Colonic mucosa (tissue), 4 donors: ENCODE measurements at regions of chr3 and their contacts with region 1.

Region 1: GRCh38 chr3:107271787-107272387 is 105.4 kb upstream of the CCDC54 start:
- DNase-seq: no peak
- H3K4me3 ChIP-seq: no peak overlapping the region
- H3K27ac ChIP-seq: no peak overlapping the region
- H3K4me1 ChIP-seq: no peaks in the 10 kb centered on the region
- H3K27me3 ChIP-seq: no peaks in the 10 kb centered on the region
- CTCF ChIP-seq: peak; percentile 57

Region 2: DNA sequence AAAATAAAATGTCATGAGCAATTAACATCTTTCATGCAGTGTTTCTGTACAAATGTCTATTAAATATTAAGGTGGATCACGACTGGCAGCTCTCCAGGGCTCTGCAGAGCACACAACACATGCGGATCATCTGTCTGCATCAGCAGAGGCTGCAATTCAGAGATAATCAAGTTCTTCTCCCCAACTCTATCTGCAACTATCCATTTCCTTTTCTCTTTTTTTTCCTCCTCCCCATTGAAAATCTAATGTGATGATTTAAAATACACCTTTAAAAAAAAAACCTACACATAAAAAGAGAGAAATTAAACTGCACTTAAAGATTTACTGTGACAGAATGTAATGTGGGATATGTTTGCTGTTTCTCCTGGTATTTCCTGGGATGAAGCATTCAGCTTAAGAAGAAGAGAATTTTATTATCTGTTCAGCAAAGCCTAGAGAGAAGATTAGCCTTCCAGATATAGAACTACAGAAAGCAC is 247.3 kb before region 1 on chr3:
- intact Hi-C with region 1: no loop called
- DNase-seq: no peak
- H3K4me3 ChIP-seq: no peak overlapping the region
- H3K27ac ChIP-seq: no peak overlapping the region
- H3K4me1 ChIP-seq: no peaks in the 10 kb centered on the region
- H3K27me3 ChIP-seq: no peaks in the 10 kb centered on the region
- CTCF ChIP-seq: no peak

Region 3: GRCh38 chr3:107429320-107430181 is 157.7 kb after region 1 on chr3:
- intact Hi-C with region 1: loop called (anchors 5 kb)
- DNase-seq: peak; percentile 70
- H3K4me3 ChIP-seq: peak overlapping the region; percentile 14
- H3K27ac ChIP-seq: peak overlapping the region; percentile 10
- H3K4me1 ChIP-seq: no peaks in the 10 kb centered on the region
- H3K27me3 ChIP-seq: no peaks in the 10 kb centered on the region
- CTCF ChIP-seq: peak; percentile 82

Region 4: GRCh38 chr3:107496855-107497254 is 225.0 kb after region 1 on chr3:
- intact Hi-C with region 1: no loop called
- DNase-seq: no peak
- H3K4me3 ChIP-seq: no peak overlapping the region
- H3K27ac ChIP-seq: no peak overlapping the region
- H3K4me1 ChIP-seq: no peaks in the 10 kb centered on the region
- H3K27me3 ChIP-seq: no peaks in the 10 kb centered on the region
- CTCF ChIP-seq: no peak

Region 5: GRCh38 chr3:107543666-107544065 is 271.8 kb after region 1 on chr3:
- intact Hi-C with region 1: loop called (anchors 10 kb)
- DNase-seq: no peak
- H3K4me3 ChIP-seq: no peak overlapping the region
- H3K27ac ChIP-seq: no peak overlapping the region
- H3K4me1 ChIP-seq: no peaks in the 10 kb centered on the region
- H3K27me3 ChIP-seq: no peaks in the 10 kb centered on the region
- CTCF ChIP-seq: no peak